Calu3 (cell line): ENCODE measurements at regions of chr3 and their contacts with region 1.

Region 1: DNA sequence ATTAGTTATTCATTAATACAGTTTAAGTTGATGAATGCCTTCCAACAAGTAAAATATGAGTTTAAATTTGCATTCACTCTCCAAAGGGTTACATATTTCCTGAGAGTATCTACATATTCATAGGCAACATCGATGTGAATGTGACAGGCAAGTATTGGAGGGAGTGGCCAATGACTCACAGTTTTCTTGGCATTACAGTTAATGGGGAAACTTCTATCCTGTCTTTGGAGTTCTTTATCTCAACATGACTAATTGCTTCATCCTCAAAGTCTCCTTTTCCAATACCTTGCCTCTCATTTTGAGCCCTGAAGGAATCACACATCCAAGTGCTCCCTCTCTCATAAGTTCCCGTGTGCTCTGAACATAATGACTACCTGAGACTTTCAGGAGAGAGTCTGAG is 439.7 kb upstream of the FRG2C start:
- DNase-seq: no peak
- H3K4me3 Mint-ChIP-seq: no peak overlapping the region
- H3K27ac Mint-ChIP-seq: no peak overlapping the region
- H3K4me1 Mint-ChIP-seq: peaks cover 18% of the 10 kb centered on the region
- H3K27me3 Mint-ChIP-seq: no peaks in the 10 kb centered on the region
- CTCF ChIP-seq: no peak

Region 2: GRCh38 chr3:75180235-75180944 is 44.0 kb before region 1 on chr3:
- CTCF ChIA-PET with region 1: no interaction called
- intact Hi-C with region 1: loop called (anchors 1 kb)
- DNase-seq: no peak
- H3K4me3 Mint-ChIP-seq: no peak overlapping the region
- H3K27ac Mint-ChIP-seq: no peak overlapping the region
- H3K4me1 Mint-ChIP-seq: no peaks in the 10 kb centered on the region
- H3K27me3 Mint-ChIP-seq: no peaks in the 10 kb centered on the region
- CTCF ChIP-seq: no peak

Region 3: GRCh38 chr3:75248974-75249373 is 24.6 kb after region 1 on chr3:
- CTCF ChIA-PET with region 1: no interaction called
- intact Hi-C with region 1: no loop called
- DNase-seq: no peak
- H3K4me3 Mint-ChIP-seq: no peak overlapping the region
- H3K27ac Mint-ChIP-seq: no peak overlapping the region
- H3K4me1 Mint-ChIP-seq: peaks cover 15% of the 10 kb centered on the region
- H3K27me3 Mint-ChIP-seq: no peaks in the 10 kb centered on the region
- CTCF ChIP-seq: no peak

Region 4: GRCh38 chr3:75303741-75304140 is 79.3 kb after region 1 on chr3:
- CTCF ChIA-PET with region 1: no interaction called
- intact Hi-C with region 1: no loop called
- DNase-seq: no peak
- H3K4me3 Mint-ChIP-seq: no peak overlapping the region
- H3K27ac Mint-ChIP-seq: no peak overlapping the region
- H3K4me1 Mint-ChIP-seq: no peaks in the 10 kb centered on the region
- H3K27me3 Mint-ChIP-seq: no peaks in the 10 kb centered on the region
- CTCF ChIP-seq: no peak